SK-N-SH (cell line): ENCODE measurements at regions of chr14 and their contacts with region 1.

Region 1: GRCh38 chr14:56474419-56475022 is 105.1 kb upstream of the TMEM260 start:
- DNase-seq: peak; percentile 43
- H3K4me3 ChIP-seq: no peak overlapping the region; a peak in 1 of 4 replicates
- H3K27ac ChIP-seq: no peak overlapping the region
- H3K4me1 ChIP-seq: no peaks in the 10 kb centered on the region
- H3K27me3 ChIP-seq: no peaks in the 10 kb centered on the region; the same call in 1 of the 2 replicates
- CTCF ChIP-seq: peak; percentile 85
- EP300 ChIP-seq: no peak
- RAD21 ChIP-seq: peak; percentile 87

Region 2: GRCh38 chr14:56463271-56463890 is 11.1 kb before region 1 on chr14:
- CTCF ChIA-PET with region 1: interaction called, 27 read pairs
- POLR2A ChIA-PET with region 1: no interaction called
- DNase-seq: no peak
- H3K4me3 ChIP-seq: no peak overlapping the region
- H3K27ac ChIP-seq: no peak overlapping the region
- H3K4me1 ChIP-seq: no peaks in the 10 kb centered on the region
- H3K27me3 ChIP-seq: no peaks in the 10 kb centered on the region
- CTCF ChIP-seq: no peak
- EP300 ChIP-seq: no peak
- RAD21 ChIP-seq: no peak